ENCODE measurements at regions of chr3 and their contacts with region 1.

Region 1: DNA sequence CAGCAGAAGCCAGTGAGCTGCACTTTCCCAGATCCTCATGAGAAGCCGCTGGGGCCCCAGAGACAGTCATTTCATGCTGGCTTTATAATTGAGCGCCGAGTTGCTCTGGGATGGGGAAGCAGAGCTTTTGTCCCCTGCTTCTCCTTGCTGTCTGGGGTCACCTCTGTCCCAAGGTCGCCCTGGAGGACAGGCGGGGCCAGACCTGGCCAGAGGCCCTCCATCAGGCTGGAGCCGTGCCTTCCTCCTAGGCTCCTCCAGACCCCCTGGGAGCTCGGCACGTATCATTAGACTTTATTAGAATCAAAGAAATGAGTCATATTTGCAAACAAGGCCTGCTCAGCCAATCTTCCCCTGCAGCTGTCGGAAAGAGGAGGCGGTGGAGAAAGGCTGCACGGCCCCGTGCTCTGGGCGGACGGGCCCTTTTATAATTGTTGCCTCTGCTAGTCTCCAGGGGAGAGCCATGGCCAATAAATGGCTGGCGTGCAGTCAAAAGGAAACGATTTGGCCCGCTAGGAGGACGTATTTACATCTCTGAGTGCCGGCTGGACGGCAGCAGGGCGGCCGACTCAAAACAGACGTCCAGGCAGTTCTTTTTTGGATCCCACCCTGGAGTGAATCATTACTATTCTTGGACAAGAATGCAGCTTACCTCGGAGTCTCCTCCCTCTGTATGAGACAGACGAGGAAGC is 50.4 kb downstream of the SLC6A6 start:
- DNase-seq: peak; percentile 84 to 90 (median 85)
- ATAC-seq: peak; percentile 88
- H3K4me3 ChIP-seq: no peak overlapping the region
- H3K4me1 ChIP-seq: peaks cover 22% of the 10 kb centered on the region
- CTCF ChIP-seq: no peak

Region 2: GRCh38 chr3:14402304-14402811 is 50.5 kb before region 1 on chr3 and contains the start of gene SLC6A6:
- intact Hi-C with region 1: loop called in 1 of 2 experiments (anchors 10 kb)
- DNase-seq: peak; percentile 96 to 98 (median 97)
- ATAC-seq: peak; percentile 94
- H3K4me3 ChIP-seq: peak within 1 kb of the TSS; percentile 24
- H3K4me1 ChIP-seq: peaks cover 20% of the 10 kb centered on the region
- CTCF ChIP-seq: no peak
- total RNA-seq, gene SLC6A6: 4.4 to 11.2 (median 10.5) TPM

Measured in mucosa of descending colon (tissue), 3 donors.